ENCODE measurements at regions of chr15 and their contacts with region 1.

Region 1: GRCh38 chr15:90654233-90655124 is 62.7 kb upstream of the BLM start:
- DNase-seq: no peak
- H3K4me3 ChIP-seq: no peak overlapping the region
- H3K4me3 Mint-ChIP-seq: no peak overlapping the region
- H3K27ac Mint-ChIP-seq: no peak overlapping the region
- H3K4me1 ChIP-seq: no peaks in the 10 kb centered on the region
- H3K4me1 Mint-ChIP-seq: no peaks in the 10 kb centered on the region
- H3K27me3 ChIP-seq: no peaks in the 10 kb centered on the region
- H3K27me3 Mint-ChIP-seq: no peaks in the 10 kb centered on the region
- CTCF ChIP-seq: no peak

Region 2: GRCh38 chr15:90583471-90584252 is 70.8 kb before region 1 on chr15:
- CTCF ChIA-PET with region 1: no interaction called
- POLR2A ChIA-PET with region 1: no interaction called
- intact Hi-C with region 1: no loop called
- DNase-seq: no peak
- H3K4me3 ChIP-seq: no peak overlapping the region
- H3K4me3 Mint-ChIP-seq: no peak overlapping the region
- H3K27ac Mint-ChIP-seq: no peak overlapping the region
- H3K4me1 ChIP-seq: no peaks in the 10 kb centered on the region
- H3K4me1 Mint-ChIP-seq: no peaks in the 10 kb centered on the region
- H3K27me3 ChIP-seq: no peaks in the 10 kb centered on the region
- H3K27me3 Mint-ChIP-seq: no peaks in the 10 kb centered on the region
- CTCF ChIP-seq: no peak

Region 3: GRCh38 chr15:90686435-90687218 is 32.1 kb after region 1 on chr15:
- CTCF ChIA-PET with region 1: no interaction called
- POLR2A ChIA-PET with region 1: no interaction called
- intact Hi-C with region 1: no loop called
- DNase-seq: no peak
- H3K4me3 ChIP-seq: no peak overlapping the region
- H3K4me3 Mint-ChIP-seq: no peak overlapping the region
- H3K27ac Mint-ChIP-seq: no peak overlapping the region
- H3K4me1 ChIP-seq: no peaks in the 10 kb centered on the region
- H3K4me1 Mint-ChIP-seq: no peaks in the 10 kb centered on the region
- H3K27me3 ChIP-seq: no peaks in the 10 kb centered on the region
- H3K27me3 Mint-ChIP-seq: no peaks in the 10 kb centered on the region
- CTCF ChIP-seq: no peak

Region 4: DNA sequence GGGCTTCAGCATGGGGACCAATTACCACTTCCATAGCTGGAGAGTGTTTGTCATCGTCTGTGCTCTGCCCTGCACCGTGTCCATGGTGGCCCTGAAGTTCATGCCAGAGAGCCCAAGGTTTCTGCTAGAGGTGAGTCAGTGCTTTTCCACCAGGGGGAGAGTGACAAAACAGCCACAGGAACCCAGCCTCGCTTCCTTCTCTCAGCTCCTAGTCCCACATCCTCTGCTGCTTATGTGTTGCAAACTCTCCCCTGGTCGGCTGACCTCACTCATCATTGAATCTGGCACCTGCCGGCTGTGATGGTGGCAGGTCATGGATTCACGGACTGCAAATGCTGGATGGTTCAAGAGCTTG is 603.9 kb after region 1 on chr15:
- CTCF ChIA-PET with region 1: no interaction called
- POLR2A ChIA-PET with region 1: no interaction called
- intact Hi-C with region 1: loop called (anchors 5 kb)
- DNase-seq: peak in 1 of 2 experiments; percentile 3
- H3K4me3 ChIP-seq: no peak overlapping the region
- H3K4me3 Mint-ChIP-seq: no peak overlapping the region
- H3K27ac Mint-ChIP-seq: no peak overlapping the region
- H3K4me1 ChIP-seq: no peaks in the 10 kb centered on the region
- H3K4me1 Mint-ChIP-seq: no peaks in the 10 kb centered on the region
- H3K27me3 ChIP-seq: no peaks in the 10 kb centered on the region; the same call in 1 of the 2 replicates
- H3K27me3 Mint-ChIP-seq: peaks cover 10% of the 10 kb centered on the region
- CTCF ChIP-seq: peak in 1 of 2 experiments; percentile 14